ENCODE measurements at regions of chr12 and their contacts with region 1.

Region 1: DNA sequence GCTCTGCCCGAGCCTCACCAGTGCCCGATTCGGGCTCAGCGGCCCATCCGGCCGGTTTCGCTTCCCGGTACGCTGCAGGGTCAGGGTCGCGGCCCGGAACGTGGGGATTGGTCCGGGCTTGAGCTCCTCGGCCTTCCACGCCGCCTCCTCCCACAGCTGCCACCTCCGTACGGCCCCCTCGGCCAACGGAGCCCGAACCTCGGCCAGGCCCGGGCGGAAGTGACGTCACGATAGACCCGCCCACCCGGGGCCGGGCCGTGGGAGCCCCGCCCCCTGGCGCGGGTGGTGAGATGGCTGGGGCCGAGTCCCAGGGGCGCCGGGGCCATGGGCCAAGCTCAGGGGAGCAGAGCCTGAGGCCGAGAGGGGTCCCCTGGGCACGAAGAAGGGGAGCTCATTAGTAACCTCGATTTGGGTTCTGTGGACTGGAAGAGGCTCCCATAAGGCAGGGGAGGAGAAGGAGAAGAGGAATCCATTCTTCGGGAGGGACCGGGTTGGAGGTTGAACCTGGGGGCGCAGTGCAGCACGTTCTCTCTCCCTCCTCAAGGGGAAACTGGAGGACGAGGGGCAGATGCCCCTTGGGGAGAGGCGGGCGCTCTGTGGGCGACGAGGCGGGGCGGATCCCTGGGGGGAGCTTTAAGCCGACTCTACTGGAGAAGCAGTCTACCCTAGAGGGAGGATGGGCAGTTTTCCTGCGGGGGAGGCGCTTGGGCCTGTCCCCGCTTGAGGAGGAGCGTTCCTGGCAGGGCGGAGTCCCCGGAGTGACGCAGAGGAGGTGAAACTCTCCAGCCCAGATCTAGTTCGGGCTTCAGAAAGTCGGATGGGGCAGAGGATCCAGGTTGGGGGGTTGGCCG is at the start of gene MLF2:
- DNase-seq: peak; percentile 99
- H3K4me3 ChIP-seq: peak within 1 kb of the TSS; percentile 52 to 76 (median 72)
- H3K27ac ChIP-seq: peak within 1 kb of the TSS; percentile 98
- H3K4me1 ChIP-seq: peaks cover 10% of the 10 kb centered on the region
- H3K27me3 ChIP-seq: no peaks in the 10 kb centered on the region
- CTCF ChIP-seq: peak in 1 of 2 donors; percentile 98
- POLR2A ChIP-seq: peak; percentile 62
- total RNA-seq, gene MLF2: 136 and 147 TPM in 2 replicates

Region 2: DNA sequence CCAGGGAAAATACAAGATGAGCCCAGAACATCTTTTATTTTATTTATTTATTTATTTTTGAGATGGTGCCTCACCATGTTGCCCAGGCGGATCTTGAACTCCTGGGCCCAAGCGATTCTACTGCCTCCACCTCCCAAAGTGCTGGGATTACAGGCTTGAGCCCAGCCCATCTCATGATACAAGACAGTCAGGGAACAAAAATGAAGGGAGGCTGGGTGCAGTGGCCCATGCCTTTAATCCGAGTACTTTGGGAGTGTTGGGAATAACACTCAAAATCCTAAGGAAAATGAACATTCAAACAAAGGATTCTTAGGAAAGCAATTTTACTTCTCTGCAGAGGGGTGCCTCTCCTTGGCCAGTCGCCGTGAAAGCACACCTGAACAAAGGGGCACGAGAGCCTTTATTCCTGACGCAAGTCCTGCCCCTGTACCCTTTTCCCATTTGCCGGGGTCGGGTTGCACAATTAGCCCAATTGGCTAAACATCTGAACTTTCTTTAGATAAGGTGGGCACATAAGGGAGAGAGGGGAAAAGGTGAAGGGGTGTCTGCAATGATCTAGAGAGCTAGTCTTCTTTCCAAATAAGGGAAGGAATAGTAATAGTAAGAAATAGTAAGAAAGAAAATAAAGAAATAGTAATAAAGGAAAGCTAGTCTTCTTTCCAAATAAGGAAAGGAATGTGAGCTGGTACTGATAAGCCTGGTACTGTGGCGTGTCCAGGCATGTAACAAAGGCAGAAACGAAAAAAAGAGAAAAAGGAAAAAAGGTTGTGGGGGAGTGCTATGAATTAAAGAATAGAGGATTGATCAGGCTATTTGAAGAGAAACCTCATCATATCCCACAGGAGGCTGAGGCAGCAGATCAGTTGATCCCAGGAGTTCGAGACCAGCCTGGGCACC is 245.8 kb before region 1 on chr12:
- CTCF ChIA-PET with region 1: no interaction called
- POLR2A ChIA-PET with region 1: no interaction called
- dilution Hi-C with region 1: no loop called
- intact Hi-C with region 1: no loop called
- DNase-seq: peak; percentile 39
- H3K4me3 ChIP-seq: no peak overlapping the region
- H3K27ac ChIP-seq: no peak overlapping the region
- H3K4me1 ChIP-seq: peaks cover 2% of the 10 kb centered on the region
- H3K27me3 ChIP-seq: no peaks in the 10 kb centered on the region
- CTCF ChIP-seq: no peak
- POLR2A ChIP-seq: no peak

Region 3: GRCh38 chr12:6723607-6724396 is 29.3 kb before region 1 on chr12 and contains the start of gene COPS7A:
- CTCF ChIA-PET with region 1: interaction called, 15 read pairs
- POLR2A ChIA-PET with region 1: interaction called, 6 read pairs
- dilution Hi-C with region 1: no loop called
- intact Hi-C with region 1: loop called (anchors 1 kb)
- DNase-seq: peak; percentile 98
- H3K4me3 ChIP-seq: peak within 1 kb of the TSS; percentile 45 to 48 (median 47)
- H3K27ac ChIP-seq: peak within 1 kb of the TSS; percentile 52
- H3K4me1 ChIP-seq: peaks cover 11% of the 10 kb centered on the region
- H3K27me3 ChIP-seq: no peaks in the 10 kb centered on the region
- CTCF ChIP-seq: no peak
- POLR2A ChIP-seq: peak; percentile 35
- total RNA-seq, gene COPS7A: 36.5 and 41.1 TPM in 2 replicates

Region 4: GRCh38 chr12:6764011-6764828 is 11.1 kb after region 1 on chr12:
- CTCF ChIA-PET with region 1: interaction called, 234 read pairs
- POLR2A ChIA-PET with region 1: interaction called, 43 read pairs
- dilution Hi-C with region 1: no loop called
- intact Hi-C with region 1: loop called (anchors 1 kb)
- DNase-seq: peak; percentile 99
- H3K4me3 ChIP-seq: peak overlapping the region in 1 of 3 experiments; percentile 36
- H3K27ac ChIP-seq: peak overlapping the region; percentile 70
- H3K4me1 ChIP-seq: peaks cover 38% of the 10 kb centered on the region
- H3K27me3 ChIP-seq: peaks cover 0 to 2% of the 10 kb centered on the region in 2 experiments
- CTCF ChIP-seq: no peak
- POLR2A ChIP-seq: no peak

Region 5: DNA sequence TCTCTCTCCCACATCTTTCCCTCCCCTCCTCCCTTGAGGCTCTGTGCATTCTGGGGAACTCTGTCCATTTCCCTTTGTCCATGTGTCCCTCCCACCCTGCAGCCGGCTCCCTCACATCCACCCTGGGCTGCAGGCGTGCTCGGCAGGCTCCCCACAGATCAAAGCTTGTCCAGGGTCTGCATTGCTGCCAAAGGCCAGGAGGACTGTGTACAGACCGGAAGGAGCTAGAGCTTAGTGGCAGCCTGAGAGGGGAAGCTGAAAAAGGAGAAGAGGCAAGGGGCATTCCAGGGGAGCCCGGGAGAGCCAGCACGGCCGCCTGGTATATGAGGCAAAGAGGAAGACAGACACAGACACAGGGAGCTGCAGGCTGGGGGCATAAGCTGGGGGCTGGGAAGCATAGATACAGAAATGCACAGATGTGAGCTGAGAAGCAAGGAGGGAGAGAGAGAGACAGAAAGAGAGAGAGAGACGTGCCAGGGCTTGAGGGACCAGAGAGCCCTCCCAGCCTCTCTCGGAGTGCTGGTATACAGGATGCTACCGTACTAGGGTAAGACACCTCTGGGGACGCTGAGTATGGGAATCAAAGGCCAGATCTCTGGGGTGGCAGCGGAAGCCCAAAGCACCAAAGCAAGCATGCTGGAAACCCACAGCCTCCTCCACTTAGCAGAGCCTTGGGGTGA is 39.5 kb after region 1 on chr12:
- CTCF ChIA-PET with region 1: interaction called, 14 read pairs
- POLR2A ChIA-PET with region 1: no interaction called
- dilution Hi-C with region 1: no loop called
- intact Hi-C with region 1: no loop called
- DNase-seq: no peak
- H3K4me3 ChIP-seq: no peak overlapping the region
- H3K27ac ChIP-seq: no peak overlapping the region
- H3K4me1 ChIP-seq: no peaks in the 10 kb centered on the region
- H3K27me3 ChIP-seq: peaks cover 10 to 12% of the 10 kb centered on the region in 2 experiments
- CTCF ChIP-seq: no peak
- POLR2A ChIP-seq: no peak

Region 6: DNA sequence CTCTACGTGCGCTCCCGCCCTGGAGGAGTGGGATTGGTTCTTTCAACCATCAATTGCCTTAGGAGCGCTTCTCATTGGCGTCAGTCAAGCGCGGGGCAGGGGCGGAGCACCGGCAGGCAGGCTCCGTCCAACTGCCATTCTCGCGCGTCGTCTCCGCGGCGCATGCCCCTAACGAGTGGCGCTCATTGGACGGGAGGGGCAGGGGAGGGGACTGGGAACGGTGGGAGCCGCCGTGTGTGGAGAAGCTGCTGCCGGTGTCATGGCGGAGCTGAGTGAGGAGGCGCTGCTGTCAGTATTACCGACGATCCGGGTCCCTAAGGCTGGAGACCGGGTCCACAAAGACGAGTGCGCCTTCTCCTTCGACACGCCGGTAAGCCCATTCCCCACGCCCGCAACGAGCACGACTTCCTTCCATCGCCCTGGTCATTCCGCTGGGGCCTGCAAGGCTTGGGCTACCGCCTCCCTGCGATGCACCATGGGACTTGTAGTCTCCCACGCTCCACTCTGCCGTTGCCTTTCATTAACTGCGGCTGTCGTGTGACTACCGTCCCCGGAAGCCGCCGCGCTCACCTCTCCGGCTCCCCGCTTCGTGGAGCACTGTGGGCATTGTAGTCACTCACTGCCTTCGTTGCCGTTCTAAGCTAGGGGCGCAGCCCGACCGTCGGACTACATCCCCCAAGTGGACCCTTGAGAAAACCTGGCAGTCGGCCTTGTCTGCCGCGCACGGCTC is 98.9 kb after region 1 on chr12 and contains the start of gene USP5:
- CTCF ChIA-PET with region 1: interaction called, 26 read pairs
- POLR2A ChIA-PET with region 1: interaction called, 6 read pairs
- dilution Hi-C with region 1: no loop called
- intact Hi-C with region 1: loop called (anchors 1 kb)
- DNase-seq: peak; percentile 100
- H3K4me3 ChIP-seq: peak within 1 kb of the TSS; percentile 63 to 93 (median 76)
- H3K27ac ChIP-seq: peak within 1 kb of the TSS; percentile 33
- H3K4me1 ChIP-seq: peaks cover 24% of the 10 kb centered on the region
- H3K27me3 ChIP-seq: no peaks in the 10 kb centered on the region
- CTCF ChIP-seq: no peak
- POLR2A ChIP-seq: peak; percentile 54
- total RNA-seq, gene USP5: 126 and 135 TPM in 2 replicates

Measured in endothelial cell of umbilical vein (primary cell).